Ovary (tissue), 10 donors: ENCODE measurements at regions of chr5 and their contacts with region 1.

Region 1: GRCh38 chr5:139690064-139690802 is 42.1 kb downstream of the CXXC5 start:
- DNase-seq: peak in 2 of 5 donors; percentile 31 to 61
- H3K4me3 ChIP-seq: no peak overlapping the region
- H3K27ac ChIP-seq: no peak overlapping the region
- H3K4me1 ChIP-seq: peaks cover 7% of the 10 kb centered on the region
- H3K27me3 ChIP-seq: no peaks in the 10 kb centered on the region
- CTCF ChIP-seq: peak in 1 of 3 donors; percentile 35
- EP300 ChIP-seq: no peak
- POLR2A ChIP-seq: no peak

Region 2: GRCh38 chr5:139315056-139315615 is 375.1 kb before region 1 on chr5:
- intact Hi-C with region 1: no loop called
- DNase-seq: no peak
- H3K4me3 ChIP-seq: no peak overlapping the region
- H3K27ac ChIP-seq: no peak overlapping the region
- H3K4me1 ChIP-seq: peaks cover 8% of the 10 kb centered on the region
- H3K27me3 ChIP-seq: no peaks in the 10 kb centered on the region
- CTCF ChIP-seq: no peak
- EP300 ChIP-seq: no peak
- POLR2A ChIP-seq: no peak

Region 3: GRCh38 chr5:139633295-139634027 is 56.8 kb before region 1 on chr5:
- intact Hi-C with region 1: loop called in 2 of 4 experiments (anchors 5 to 10 kb)
- DNase-seq: peak; percentile 44 to 80 (median 73)
- H3K4me3 ChIP-seq: no peak overlapping the region
- H3K27ac ChIP-seq: no peak overlapping the region
- H3K4me1 ChIP-seq: peaks cover 8% of the 10 kb centered on the region
- H3K27me3 ChIP-seq: no peaks in the 10 kb centered on the region
- CTCF ChIP-seq: peak; percentile 78 to 95 (median 88)
- EP300 ChIP-seq: no peak
- POLR2A ChIP-seq: no peak

Region 4: GRCh38 chr5:139648205-139649081 is 41.8 kb before region 1 on chr5 and contains the start of gene CXXC5:
- intact Hi-C with region 1: loop called in 1 of 4 experiments (anchors 5 kb)
- DNase-seq: peak; percentile 49 to 80 (median 75)
- H3K4me3 ChIP-seq: peak within 1 kb of the TSS; percentile 49
- H3K27ac ChIP-seq: peak within 1 kb of the TSS in 1 of 2 donors; percentile 38
- H3K4me1 ChIP-seq: peaks cover 12% of the 10 kb centered on the region
- H3K27me3 ChIP-seq: peaks cover 2% of the 10 kb centered on the region
- CTCF ChIP-seq: no peak
- EP300 ChIP-seq: no peak
- POLR2A ChIP-seq: peak; percentile 12
- total RNA-seq, gene CXXC5: 4.4 to 35.7 (median 8.7) TPM

Region 5: DNA sequence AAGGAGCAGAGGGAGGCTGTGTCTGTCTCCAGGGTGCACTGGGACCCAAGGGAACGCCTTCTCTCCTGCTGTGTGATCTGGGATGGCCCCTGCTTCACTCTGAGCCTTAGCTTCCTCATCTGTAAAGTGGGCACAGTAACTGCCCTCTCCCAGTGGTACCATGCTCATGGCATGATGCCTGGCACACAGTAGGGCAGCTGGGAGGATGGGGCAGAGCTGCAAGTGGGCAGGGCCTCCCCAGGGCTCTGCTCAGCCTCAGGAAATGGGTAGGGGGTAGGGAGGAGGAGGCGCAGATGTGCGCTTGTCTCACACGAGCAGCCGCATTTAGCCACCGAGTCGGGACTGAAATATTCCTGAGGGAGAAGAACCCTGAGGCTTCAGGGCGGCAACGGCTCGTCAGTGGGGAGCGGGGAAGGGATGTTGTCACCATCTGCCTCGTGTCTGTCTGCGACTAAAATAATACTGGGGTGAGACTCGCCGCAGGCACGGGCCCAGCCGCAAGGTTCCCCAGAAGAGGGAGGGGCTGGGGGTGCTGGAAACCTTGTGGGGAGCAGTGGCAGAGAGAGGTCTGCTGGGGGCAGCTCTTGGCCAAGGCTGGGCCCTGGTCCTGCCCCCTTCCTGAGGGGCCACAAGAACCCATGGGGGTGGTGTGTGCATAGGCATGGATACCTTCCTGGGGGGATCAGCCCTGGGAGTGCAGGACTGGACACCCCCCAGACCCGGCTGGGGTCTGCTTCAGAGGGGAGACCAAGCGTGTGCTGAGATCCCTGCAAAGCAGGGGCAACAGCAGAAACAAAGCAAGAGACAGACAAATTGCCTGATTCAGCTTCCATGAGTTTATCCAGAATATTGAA is 50.1 kb after region 1 on chr5:
- intact Hi-C with region 1: loop called in 1 of 4 experiments (anchors 2 kb)
- DNase-seq: no peak
- H3K4me3 ChIP-seq: no peak overlapping the region
- H3K27ac ChIP-seq: no peak overlapping the region
- H3K4me1 ChIP-seq: no peaks in the 10 kb centered on the region
- H3K27me3 ChIP-seq: no peaks in the 10 kb centered on the region
- CTCF ChIP-seq: no peak
- EP300 ChIP-seq: no peak
- POLR2A ChIP-seq: no peak